ENCODE measurements at regions of chr11 and their contacts with region 1.

Region 1: DNA sequence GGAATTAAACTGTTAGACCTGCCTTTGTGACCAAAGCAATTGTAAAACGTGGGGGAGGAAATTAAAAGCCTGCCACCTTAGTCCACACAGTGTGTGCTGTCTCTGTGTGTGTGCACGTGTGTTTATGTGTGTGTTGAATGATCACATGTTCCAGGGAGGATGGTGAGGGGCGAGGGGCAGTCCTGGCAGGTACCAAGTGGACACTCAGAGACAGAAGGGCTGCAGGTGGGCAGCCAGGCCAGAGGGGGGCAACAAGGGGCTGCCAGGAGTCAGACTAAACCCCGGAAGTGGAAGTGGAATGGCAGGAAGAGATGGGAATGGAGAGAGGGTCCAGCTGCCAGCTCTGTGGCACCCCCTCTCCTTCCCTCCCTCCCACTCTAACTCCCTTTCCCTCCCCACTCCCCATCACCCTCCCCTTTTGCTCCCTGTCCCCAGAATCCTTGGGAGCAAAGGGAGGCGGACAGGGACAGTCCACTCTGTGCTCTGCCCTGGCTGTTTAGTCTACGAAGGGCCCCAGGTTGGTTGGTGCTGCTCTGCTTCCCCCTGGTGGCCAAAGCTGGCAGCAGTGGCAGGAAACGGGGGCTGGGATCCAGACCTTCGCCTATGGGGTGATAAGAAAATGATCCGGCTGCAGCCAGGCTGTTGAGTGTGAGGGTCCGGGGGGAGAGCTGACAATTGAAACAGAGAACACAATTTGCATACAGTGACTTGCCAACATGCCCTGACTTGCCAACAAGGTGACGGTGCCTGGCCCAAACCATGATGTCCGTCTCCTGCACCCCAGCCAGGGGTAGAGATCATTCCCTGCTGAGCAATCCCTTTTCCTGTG is 24.4 kb downstream of the P2RY2 start:
- DNase-seq: peak; percentile 60
- H3K4me3 Mint-ChIP-seq: no peak overlapping the region
- H3K27ac Mint-ChIP-seq: no peak overlapping the region
- H3K4me1 Mint-ChIP-seq: no peaks in the 10 kb centered on the region
- H3K27me3 Mint-ChIP-seq: peaks cover 12% of the 10 kb centered on the region

Region 2: DNA sequence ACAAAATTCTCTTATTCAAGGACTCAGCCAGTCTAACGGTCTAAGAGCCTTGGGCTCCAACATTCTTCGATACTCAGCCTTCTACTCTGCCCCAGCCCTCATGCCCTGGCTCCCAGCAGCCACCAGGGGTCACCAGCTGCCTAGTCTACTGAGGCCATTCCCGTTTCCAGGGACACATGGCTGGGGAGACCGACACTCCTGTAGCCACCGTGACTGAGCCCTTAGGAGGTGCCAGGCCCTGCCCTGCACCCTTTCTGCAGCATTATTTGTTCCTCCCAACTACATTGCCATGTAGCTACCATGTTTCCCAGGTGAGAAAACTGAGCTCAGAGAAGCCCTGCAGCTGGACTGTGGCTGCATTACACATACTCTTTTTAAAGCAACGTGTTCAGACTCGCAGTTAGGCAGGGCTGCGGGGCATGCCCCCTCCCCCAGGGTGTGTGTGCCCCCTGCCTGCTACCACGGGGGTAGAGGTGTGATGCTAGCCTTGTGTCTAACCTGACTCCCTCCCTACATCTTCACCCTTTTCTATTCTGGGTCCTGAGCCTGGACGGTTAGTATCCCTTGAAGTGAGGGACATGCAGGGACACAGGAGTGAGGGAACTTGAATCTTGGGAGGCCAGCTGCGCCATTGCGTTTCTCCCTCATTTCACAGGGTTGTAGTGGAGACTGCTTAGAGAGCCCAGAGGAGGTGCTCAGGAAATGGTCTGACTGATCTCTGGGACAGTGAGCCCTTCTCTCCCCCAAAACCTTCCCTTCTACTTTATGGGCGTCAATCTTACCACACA is 410.8 kb before region 1 on chr11:
- intact Hi-C with region 1: loop called (anchors 2 kb)
- DNase-seq: no peak
- H3K4me3 Mint-ChIP-seq: no peak overlapping the region
- H3K27ac Mint-ChIP-seq: peak overlapping the region; percentile 65
- H3K4me1 Mint-ChIP-seq: peaks cover 27% of the 10 kb centered on the region
- H3K27me3 Mint-ChIP-seq: no peaks in the 10 kb centered on the region

Region 3: DNA sequence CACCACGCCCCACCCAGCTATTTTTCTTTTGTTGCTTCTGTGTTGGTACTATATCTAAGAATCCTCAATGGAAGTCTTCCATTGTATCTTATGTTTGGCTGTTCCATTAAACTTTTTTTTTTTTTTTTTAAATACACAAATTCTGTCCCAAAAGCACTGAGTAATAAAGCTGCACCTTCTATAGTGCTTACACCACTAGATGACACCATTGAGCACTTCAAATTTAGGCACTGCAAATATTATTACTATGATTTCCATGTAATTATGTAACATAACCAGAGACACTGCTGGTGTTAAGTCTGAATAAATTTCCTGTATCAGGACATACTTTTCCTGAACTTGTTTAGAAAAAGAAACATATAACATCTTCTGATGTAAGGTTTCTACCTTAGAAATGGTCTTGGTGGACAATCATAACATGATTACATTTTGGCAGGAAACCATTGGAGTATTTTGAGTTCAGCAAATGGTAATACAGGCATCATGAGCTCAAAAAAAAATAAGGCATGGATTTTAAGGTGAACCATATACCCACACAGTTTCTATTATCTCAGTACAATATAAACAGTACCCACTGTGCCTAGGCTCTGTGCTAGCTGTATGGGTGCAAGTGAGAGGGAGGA is 317.8 kb before region 1 on chr11:
- intact Hi-C with region 1: loop called (anchors 2 kb)
- DNase-seq: no peak
- H3K4me3 Mint-ChIP-seq: no peak overlapping the region
- H3K27ac Mint-ChIP-seq: no peak overlapping the region
- H3K4me1 Mint-ChIP-seq: peaks cover 7% of the 10 kb centered on the region
- H3K27me3 Mint-ChIP-seq: no peaks in the 10 kb centered on the region

Region 4: DNA sequence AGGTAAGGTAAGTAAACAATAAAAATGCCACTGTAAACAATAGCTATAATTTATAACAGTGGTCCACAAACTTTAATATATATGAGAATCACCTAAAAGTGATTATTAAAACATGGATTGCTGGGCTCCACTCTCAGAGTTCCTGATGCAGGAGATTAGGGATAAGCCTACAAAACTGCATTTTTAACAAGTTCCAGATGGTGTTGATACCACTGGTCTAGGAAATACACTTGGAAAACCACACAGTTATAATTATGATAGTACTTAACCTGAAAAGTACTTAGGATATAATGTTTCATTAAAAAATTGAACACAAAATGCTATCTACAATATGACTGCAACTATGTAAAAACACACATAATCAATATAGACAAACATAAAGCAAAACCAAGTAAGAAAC is 120.8 kb before region 1 on chr11:
- intact Hi-C with region 1: no loop called
- DNase-seq: no peak
- H3K4me3 Mint-ChIP-seq: no peak overlapping the region
- H3K27ac Mint-ChIP-seq: no peak overlapping the region
- H3K4me1 Mint-ChIP-seq: peaks cover 14% of the 10 kb centered on the region
- H3K27me3 Mint-ChIP-seq: no peaks in the 10 kb centered on the region

Region 5: GRCh38 chr11:73184953-73185671 is 57.4 kb before region 1 on chr11:
- intact Hi-C with region 1: loop called (anchors 1 kb)
- DNase-seq: peak; percentile 40
- H3K4me3 Mint-ChIP-seq: no peak overlapping the region
- H3K27ac Mint-ChIP-seq: no peak overlapping the region
- H3K4me1 Mint-ChIP-seq: peaks cover 13% of the 10 kb centered on the region
- H3K27me3 Mint-ChIP-seq: peaks cover 21% of the 10 kb centered on the region

Region 6: DNA sequence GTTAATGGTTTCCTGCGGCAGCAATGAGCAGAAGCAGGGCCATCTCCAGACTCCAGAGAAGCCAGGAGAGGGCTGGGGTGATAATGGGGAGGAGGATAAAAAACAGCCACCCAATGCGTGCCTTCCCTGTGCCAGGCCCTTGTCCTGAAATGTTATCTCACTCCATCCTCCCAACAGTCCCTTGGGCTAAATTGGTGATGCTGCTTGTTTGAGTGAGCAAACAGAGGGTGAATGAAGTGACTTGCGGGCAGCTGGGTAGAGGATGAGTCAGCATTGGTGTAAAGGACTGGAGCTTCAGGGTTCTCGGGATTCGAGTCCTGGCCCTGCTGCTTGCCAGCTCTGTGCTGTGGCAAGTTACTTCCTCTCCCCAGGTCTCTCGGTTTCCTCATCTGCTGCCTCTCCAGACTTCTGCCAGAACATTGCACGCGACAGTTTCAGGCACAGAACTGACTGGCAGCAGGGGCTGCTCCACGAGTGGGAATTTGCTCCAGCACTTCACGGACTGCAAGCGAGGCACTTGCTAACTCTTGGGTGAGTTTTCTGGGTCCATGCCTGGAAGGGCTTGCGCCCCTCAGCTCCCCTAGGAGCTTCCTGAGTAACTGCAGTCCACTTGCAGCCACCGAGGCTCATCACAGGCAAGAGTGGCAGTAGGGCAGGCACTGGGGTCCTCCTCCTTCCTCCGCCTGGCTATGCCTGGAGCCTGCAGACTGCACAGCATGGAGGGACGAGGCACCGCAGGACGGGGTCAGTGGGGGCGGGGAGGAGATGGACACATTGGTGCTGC is 29.7 kb after region 1 on chr11 and contains the start of gene P2RY6:
- intact Hi-C with region 1: no loop called
- DNase-seq: no peak
- H3K4me3 Mint-ChIP-seq: no peak within 1 kb of the TSS
- H3K27ac Mint-ChIP-seq: no peak within 1 kb of the TSS
- H3K4me1 Mint-ChIP-seq: no peaks in the 10 kb centered on the region
- H3K27me3 Mint-ChIP-seq: peaks cover 17% of the 10 kb centered on the region
- total RNA-seq, gene P2RY6: not detected in 2 replicates

Region 7: DNA sequence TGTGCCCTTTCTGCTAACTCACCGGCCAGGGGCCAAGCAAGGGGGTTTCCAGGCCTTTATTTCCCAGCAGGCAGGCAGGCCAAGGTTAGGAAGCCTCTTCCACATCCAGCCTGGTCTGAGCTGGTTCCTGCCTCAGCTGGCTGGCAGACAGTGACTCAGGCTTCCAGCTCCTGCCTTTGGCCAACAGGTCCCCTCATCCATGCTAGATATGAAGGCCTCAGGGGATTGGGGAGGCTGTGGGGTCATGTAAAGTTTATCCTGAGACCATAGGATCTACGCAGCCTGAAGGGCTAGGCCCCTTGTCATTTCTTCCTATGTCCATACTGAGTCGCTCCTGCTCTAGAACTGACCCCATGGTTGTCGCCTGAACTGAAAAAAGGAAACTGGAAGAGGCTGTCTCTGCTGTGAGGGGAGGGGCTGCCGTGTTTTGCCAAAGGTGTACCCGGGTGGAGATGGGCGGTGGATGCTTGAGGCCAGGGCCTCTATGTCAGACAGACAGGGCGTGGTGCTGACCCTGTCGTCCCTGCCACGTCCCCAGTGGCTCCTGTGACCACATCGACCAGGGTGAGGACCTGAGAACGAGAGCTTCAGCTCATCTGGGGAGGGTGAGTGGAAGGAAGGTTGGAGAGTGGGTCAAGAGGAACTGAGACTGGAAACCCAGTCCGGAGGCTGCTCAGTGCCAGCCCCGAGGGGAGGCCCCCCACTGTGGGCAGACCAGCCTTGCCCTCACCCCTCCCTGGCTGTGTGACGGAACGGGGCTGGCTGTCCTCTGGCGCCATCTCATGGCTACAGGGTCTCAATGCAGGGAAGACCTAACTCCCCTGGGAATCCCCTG is 46.6 kb after region 1 on chr11:
- intact Hi-C with region 1: loop called (anchors 2 kb)
- DNase-seq: peak; percentile 36
- H3K4me3 Mint-ChIP-seq: peak overlapping the region; percentile 23
- H3K27ac Mint-ChIP-seq: no peak overlapping the region
- H3K4me1 Mint-ChIP-seq: peaks cover 29% of the 10 kb centered on the region
- H3K27me3 Mint-ChIP-seq: peaks cover 4% of the 10 kb centered on the region

Measured in activated T-helper 1 cell treated with anti-CD3 and anti-CD28 coated beads, Interleukin-12 subunit alpha, Interleukin-12 subunit beta, Interleukin-2, Interleukin-4 antibody, amounts not matched to agents 30 ng/mL and 10 ng/mL and 1 ng/mL, durations not matched to agents 14 hours and 24 hours and 36 hours (primary cell).